ENCODE measurements at regions of chr9 and their contacts with region 1.

Region 1: DNA sequence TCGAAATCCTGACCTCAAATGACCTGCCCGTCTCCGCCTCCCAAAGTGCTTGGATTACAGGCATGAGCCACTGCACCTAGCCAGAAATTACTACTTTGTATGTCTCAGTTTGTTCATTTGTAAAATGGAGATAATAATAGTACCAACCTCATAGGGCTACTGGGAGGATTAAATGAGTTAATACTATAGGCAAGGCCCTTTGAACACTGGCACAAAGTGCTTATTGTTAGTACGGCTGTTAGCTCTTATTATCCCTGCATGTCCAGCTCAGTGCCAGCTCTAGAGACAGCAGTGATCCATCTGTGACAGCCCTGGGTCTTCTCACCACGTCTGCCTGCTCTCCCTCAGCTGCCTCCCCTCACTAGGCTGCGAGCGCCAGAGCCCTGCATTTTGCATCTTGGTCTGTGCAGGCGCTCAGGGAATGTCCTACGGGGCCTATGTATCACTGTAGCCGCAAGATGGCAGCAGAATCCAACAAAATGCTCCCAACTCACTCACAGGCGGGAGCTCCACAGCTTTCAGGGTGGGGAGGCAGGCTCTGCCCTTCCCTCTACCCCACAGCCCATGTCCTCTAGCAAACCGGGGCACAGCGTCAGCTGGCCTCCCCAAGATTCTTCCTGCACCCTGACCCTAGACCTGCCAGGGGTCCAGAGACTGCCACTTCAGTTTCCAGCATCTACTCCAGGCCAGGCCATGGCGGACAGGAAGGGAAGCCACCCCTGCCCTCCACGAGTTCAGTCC is 17.7 kb upstream of the AKNA start:
- DNase-seq: no peak
- H3K4me3 ChIP-seq: no peak overlapping the region
- H3K27ac ChIP-seq: no peak overlapping the region
- H3K4me1 ChIP-seq: no peaks in the 10 kb centered on the region
- H3K27me3 ChIP-seq: no peaks in the 10 kb centered on the region
- CTCF ChIP-seq: peak; percentile 43 to 90 (median 56)
- POLR2A ChIP-seq: no peak

Region 2: GRCh38 chr9:114653556-114654159 is 248.2 kb after region 1 on chr9:
- intact Hi-C with region 1: loop called (anchors 5 kb)
- DNase-seq: peak in 1 of 2 donors; percentile 82
- H3K4me3 ChIP-seq: no peak overlapping the region
- H3K27ac ChIP-seq: peak overlapping the region; percentile 37
- H3K4me1 ChIP-seq: peaks cover 8% of the 10 kb centered on the region
- H3K27me3 ChIP-seq: no peaks in the 10 kb centered on the region
- CTCF ChIP-seq: peak; percentile 80 to 89 (median 88)
- POLR2A ChIP-seq: no peak

Measured in vagina (tissue), 2 donors.